Activated CD4-positive, alpha-beta T cell treated with anti-CD3 and anti-CD28 coated beads, Interleukin-2, amount 10 ng/mL, durations not matched to agents 7 days and 5 days (primary cell): ENCODE measurements at regions of chr2 and their contacts with region 1.

Region 1: GRCh38 chr2:69816923-69817542 is 12.4 kb upstream of the GMCL1 start:
- DNase-seq: peak; percentile 85
- H3K4me3 Mint-ChIP-seq: no peak overlapping the region
- H3K27ac Mint-ChIP-seq: no peak overlapping the region
- H3K4me1 Mint-ChIP-seq: peaks cover 8% of the 10 kb centered on the region
- H3K27me3 Mint-ChIP-seq: no peaks in the 10 kb centered on the region

Region 2: DNA sequence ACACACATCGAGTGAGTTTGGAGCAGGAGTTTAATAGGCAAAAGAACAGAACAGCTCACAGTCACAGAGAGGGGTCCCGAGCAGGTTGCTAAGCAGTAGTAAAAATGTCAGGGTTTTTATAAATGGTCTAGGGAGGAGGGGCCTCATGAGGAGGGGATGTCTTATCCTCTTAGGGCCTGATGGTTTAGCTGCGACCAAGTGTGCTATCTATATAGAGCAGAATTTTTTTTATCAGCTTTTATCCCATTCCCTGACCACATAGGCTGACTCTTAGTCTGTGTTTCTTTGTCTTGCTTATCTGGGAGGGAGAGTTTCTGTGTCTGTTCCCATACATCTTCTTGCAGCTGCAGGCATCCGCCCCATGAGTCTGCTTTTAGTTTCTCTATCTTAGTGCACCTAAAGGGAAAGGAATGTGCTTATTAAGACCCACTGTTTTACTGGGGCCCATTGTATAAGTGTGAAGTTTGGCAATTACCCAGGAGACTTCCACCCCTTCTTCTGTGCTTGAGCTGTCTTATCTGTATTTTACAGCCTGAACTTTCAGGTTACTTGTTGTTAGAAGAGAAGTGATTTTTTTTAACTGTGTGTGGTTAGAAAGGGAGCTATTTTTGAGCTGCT is 18.0 kb before region 1 on chr2:
- CTCF ChIA-PET with region 1: interaction called, 14 read pairs
- POLR2A ChIA-PET with region 1: no interaction called
- DNase-seq: no peak
- H3K4me3 Mint-ChIP-seq: no peak overlapping the region
- H3K27ac Mint-ChIP-seq: no peak overlapping the region
- H3K4me1 Mint-ChIP-seq: peaks cover 29% of the 10 kb centered on the region
- H3K27me3 Mint-ChIP-seq: no peaks in the 10 kb centered on the region

Region 3: DNA sequence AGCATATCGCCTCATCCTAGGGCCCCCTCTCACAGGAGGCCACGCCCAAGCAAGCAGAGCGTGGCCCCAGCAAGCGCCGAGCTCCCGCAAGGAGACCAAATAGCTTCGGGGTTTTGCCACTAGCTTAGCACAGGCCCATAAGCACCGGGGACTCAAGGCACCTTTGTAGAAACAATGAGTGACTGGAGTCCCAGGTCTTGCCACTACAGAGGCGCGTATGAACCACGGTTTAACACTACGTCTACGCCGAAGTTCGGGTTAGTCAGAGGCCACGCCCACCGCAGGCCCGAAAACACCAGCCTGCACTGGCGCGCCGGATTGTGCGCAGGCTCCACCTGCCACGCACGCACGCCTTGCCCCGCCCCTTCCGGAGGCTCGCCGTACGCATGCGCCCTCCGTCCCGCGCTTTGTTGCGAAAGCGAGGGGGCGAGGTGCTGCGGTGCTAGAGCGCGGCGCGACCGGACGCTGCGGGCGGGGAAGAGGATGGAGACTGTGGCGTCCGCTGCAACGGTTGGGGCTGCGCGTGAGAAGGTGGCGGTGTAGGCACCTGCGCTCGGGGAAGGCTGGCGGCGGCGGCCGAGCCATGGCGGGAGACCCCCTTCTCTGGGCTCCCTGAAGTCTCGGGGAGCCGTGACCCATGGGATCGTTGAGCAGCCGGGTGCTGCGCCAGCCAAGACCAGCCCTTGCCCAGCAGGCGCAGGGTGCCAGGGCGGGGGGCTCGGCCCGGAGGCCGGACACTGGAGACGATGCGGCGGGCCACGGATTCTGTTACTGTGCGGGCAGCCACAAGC is 12.4 kb after region 1 on chr2 and contains the start of gene GMCL1:
- CTCF ChIA-PET with region 1: interaction called, 17 read pairs
- POLR2A ChIA-PET with region 1: no interaction called
- DNase-seq: peak; percentile 98
- H3K4me3 Mint-ChIP-seq: peak within 1 kb of the TSS; percentile 90
- H3K27ac Mint-ChIP-seq: peak within 1 kb of the TSS; percentile 97
- H3K4me1 Mint-ChIP-seq: peaks cover 58% of the 10 kb centered on the region
- H3K27me3 Mint-ChIP-seq: no peaks in the 10 kb centered on the region
- total RNA-seq, gene GMCL1: 19.4 to 24.9 TPM